ENCODE measurements at regions of chr17 and their contacts with region 1.

Region 1: DNA sequence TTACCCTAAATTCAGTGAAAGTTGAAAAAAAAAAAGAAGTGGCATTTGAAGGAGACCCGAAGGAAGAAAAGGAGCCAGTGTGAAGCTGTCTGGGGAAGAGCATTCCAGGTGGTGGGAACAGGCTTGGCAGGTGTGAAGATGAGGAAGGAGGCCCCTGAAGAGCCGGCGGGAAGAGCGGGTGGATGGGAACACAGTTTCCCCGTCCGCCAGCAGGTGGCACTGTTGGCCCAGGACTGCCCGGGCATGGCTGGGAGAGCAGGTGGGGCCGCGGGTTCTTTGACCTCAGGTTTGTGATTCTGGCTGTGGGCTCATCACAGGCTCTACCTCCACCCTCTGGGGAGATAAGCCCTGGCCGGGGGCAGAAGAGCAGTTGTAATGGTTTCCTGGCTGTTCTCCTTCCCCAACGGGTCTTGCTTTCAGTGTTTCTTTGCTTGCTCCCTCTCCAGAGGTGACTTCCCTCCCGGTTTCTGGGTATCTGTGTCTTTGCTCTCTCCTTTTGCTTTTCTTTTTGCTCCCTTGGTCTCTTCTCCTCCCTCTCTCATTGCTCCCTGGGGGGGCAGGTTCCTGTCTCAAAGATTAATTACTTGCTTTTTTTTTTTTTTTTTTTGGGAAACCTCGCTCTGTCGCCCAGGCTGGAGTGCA is 32.3 kb downstream of the RAP1GAP2 start:
- DNase-seq: peak; percentile 61 to 97 (median 82)
- ATAC-seq: peak; percentile 91 to 99 (median 94)
- H3K4me3 ChIP-seq: no peak overlapping the region
- H3K27ac ChIP-seq: no peak overlapping the region
- H3K4me1 ChIP-seq: no peaks in the 10 kb centered on the region
- H3K27me3 ChIP-seq: no peaks in the 10 kb centered on the region
- CTCF ChIP-seq: peak; percentile 87 to 95 (median 90)

Region 2: GRCh38 chr17:2758870-2759269 is 69.6 kb before region 1 on chr17:
- intact Hi-C with region 1: no loop called
- DNase-seq: no peak
- ATAC-seq: no peak
- H3K4me3 ChIP-seq: no peak overlapping the region
- H3K27ac ChIP-seq: no peak overlapping the region
- H3K4me1 ChIP-seq: no peaks in the 10 kb centered on the region
- H3K27me3 ChIP-seq: no peaks in the 10 kb centered on the region
- CTCF ChIP-seq: no peak

Region 3: DNA sequence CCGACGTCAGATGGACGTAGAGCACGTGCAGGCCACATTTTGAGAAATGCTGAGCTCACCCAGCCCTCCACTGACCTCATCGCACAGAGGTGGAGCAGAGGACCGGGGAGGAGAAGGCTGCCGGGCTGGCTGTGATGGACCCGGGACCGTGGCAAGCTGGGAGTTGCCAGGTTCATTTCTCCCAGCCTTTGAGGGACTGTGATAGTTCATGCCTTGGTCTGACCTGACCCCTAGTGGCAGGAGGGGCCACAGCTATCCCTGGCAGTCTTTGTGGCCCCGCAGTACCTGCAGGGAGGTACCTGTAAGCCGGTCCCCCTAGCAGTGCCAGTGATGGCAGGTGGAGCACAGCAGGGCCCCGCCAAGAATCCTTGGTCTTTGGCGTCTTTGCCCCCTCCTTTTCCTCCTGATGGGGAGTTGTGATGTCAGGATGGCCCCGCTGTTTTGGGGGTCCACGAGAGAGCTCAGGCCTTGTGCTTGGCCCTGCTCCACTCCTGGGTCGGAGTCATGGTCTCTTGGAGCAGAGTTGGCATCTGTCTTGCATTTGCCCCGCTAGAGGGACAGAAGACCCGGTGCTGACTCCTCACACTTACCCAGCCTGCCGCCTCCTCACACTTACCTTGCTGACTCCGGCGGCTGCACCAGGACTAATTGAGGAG is 184.5 kb after region 1 on chr17:
- intact Hi-C with region 1: loop called in 1 of 3 experiments (anchors 5 kb)
- DNase-seq: peak; percentile 55 to 79 (median 72)
- ATAC-seq: peak; percentile 79 to 93 (median 90)
- H3K4me3 ChIP-seq: no peak overlapping the region
- H3K27ac ChIP-seq: no peak overlapping the region
- H3K4me1 ChIP-seq: no peaks in the 10 kb centered on the region
- H3K27me3 ChIP-seq: no peaks in the 10 kb centered on the region
- CTCF ChIP-seq: peak; percentile 60 to 65 (median 63)